ENCODE measurements at regions of chr9 and their contacts with region 1.

Region 1: DNA sequence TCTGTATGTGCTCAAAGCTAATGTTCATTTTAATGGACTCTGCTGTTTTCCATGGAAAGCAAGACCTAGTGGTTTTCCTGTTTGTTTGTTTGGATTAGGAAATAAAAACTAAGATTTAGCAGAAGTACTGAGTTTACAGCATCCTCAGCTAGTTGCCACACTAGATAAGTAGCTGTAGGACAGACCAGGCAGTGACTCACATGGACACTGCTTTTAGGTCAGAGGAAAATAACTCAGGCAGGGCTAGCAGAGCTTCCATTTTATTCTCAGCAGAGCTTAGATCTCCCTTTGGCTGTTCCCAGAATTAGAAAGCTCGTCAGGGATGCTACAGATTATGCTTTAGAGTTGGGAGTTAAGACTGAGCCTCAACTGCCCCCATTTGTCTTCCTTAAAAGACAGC is 204.4 kb downstream of the SH3GL2 start:
- DNase-seq: no peak
- H3K4me3 ChIP-seq: no peak overlapping the region
- H3K27ac ChIP-seq: no peak overlapping the region
- H3K4me1 ChIP-seq: no peaks in the 10 kb centered on the region
- H3K27me3 ChIP-seq: no peaks in the 10 kb centered on the region
- CTCF ChIP-seq: no peak

Region 2: GRCh38 chr9:17682684-17683083 is 100.5 kb before region 1 on chr9:
- CTCF ChIA-PET with region 1: no interaction called
- dilution Hi-C with region 1: loop called (anchors 5 kb)
- in situ Hi-C with region 1: no loop called
- intact Hi-C with region 1: no loop called
- DNase-seq: no peak
- H3K4me3 ChIP-seq: no peak overlapping the region
- H3K27ac ChIP-seq: no peak overlapping the region
- H3K4me1 ChIP-seq: no peaks in the 10 kb centered on the region
- H3K27me3 ChIP-seq: no peaks in the 10 kb centered on the region
- CTCF ChIP-seq: no peak

Region 3: GRCh38 chr9:17719053-17719452 is 64.2 kb before region 1 on chr9:
- CTCF ChIA-PET with region 1: no interaction called
- dilution Hi-C with region 1: no loop called
- in situ Hi-C with region 1: no loop called
- intact Hi-C with region 1: no loop called
- DNase-seq: no peak
- H3K4me3 ChIP-seq: no peak overlapping the region
- H3K27ac ChIP-seq: no peak overlapping the region
- H3K4me1 ChIP-seq: no peaks in the 10 kb centered on the region
- H3K27me3 ChIP-seq: no peaks in the 10 kb centered on the region
- CTCF ChIP-seq: no peak

Region 4: GRCh38 chr9:17894471-17895178 is 111.4 kb after region 1 on chr9:
- CTCF ChIA-PET with region 1: no interaction called
- dilution Hi-C with region 1: no loop called
- in situ Hi-C with region 1: no loop called
- intact Hi-C with region 1: no loop called
- DNase-seq: no peak
- H3K4me3 ChIP-seq: no peak overlapping the region
- H3K27ac ChIP-seq: no peak overlapping the region
- H3K4me1 ChIP-seq: no peaks in the 10 kb centered on the region
- H3K27me3 ChIP-seq: no peaks in the 10 kb centered on the region
- CTCF ChIP-seq: no peak

Measured in mammary epithelial cell (primary cell).